Activated B cell treated with CpG ODN at 0.5 μM for 24 hours (primary cell): ENCODE measurements at regions of chr1 and their contacts with region 1.

Region 1: DNA sequence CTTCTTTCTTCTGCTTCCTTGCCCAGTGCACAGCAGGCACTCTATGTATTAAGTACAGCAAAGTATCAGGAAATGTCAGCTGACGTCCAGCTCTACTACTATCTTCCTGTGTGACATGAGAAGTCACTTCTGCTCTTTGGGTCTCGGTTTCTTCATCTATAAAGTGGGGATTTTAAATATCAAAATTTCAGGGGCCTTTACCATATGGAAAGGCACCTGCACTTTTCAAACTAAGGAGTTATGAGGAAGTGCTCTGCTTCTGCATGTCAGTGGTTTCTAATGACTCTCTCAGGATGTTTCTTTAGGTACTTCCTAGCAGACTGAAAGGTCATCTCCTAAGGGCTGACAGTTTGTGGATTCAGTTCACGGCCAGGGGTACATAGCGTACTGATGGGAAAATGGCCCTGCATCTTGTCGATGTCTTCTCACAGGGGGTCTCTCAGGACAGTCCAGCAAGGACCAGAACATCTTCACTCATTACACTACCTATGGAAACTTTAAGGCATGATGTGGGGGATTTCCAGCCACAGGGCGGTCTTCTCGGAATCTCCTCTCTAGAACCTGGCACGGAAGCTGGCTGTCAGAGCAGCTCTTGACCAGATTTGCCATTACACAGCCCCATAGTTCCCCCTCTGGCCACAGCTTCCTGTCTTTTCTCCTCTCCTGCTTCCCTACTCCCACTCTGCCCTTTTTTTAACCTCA is 42.0 kb upstream of the MTF1 start:
- DNase-seq: peak; percentile 23
- ATAC-seq: peak; percentile 76
- H3K4me3 Mint-ChIP-seq: peak overlapping the region; percentile 68
- H3K27ac Mint-ChIP-seq: peak overlapping the region; percentile 91
- H3K4me1 Mint-ChIP-seq: peaks cover 22% of the 10 kb centered on the region
- H3K27me3 Mint-ChIP-seq: no peaks in the 10 kb centered on the region
- CTCF ChIP-seq: no peak

Region 2: GRCh38 chr1:37817481-37817880 is 83.9 kb before region 1 on chr1:
- CTCF ChIA-PET with region 1: no interaction called
- POLR2A ChIA-PET with region 1: no interaction called
- intact Hi-C with region 1: no loop called
- DNase-seq: no peak
- ATAC-seq: no peak
- H3K4me3 Mint-ChIP-seq: no peak overlapping the region
- H3K27ac Mint-ChIP-seq: no peak overlapping the region
- H3K4me1 Mint-ChIP-seq: peaks cover 10% of the 10 kb centered on the region
- H3K27me3 Mint-ChIP-seq: no peaks in the 10 kb centered on the region
- CTCF ChIP-seq: no peak

Region 3: DNA sequence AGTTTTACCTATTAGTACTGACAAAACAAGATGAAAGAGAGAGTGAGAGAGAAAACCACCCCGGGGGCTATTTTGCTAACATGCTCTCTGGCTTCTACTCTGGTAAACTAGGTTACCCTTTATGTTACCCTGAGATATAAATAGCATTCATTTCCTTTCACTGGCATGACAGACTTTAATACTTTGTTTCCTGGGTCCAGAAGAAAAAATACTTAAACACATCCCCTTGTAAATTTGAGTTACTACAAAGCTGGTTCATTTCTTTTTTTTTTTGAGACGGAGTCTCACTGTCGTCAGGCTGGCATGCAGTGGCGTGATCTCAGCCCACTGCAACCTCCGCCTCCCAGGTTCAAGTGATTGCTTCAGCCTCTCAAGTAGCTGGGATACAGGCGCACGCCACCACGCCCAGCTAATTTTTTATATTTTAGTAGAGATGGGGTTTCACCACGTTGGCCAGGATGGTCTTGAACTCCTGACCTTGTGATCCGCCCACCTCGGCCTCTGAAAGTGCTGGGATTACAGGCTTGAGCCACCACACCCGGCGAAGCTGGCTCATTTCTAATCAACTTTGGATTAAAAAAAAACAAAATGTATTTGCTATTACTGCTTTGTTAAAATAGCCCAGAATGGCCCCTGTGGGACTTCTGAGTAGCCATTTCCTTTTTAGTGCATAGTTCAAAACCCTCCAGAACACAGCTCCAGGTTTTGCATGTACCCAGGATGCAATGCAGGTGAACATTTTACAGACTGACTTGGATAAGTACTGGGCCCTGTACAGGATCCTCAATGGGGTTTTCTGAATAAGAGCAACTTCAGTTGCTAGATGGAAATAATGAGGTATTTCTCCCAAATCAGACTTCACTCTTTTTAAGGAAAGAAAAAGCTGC is 24.9 kb after region 1 on chr1:
- CTCF ChIA-PET with region 1: interaction called, 4 read pairs
- POLR2A ChIA-PET with region 1: interaction called, 16 read pairs
- intact Hi-C with region 1: loop called (anchors 2 kb)
- DNase-seq: no peak
- ATAC-seq: peak; percentile 15
- H3K4me3 Mint-ChIP-seq: peak overlapping the region; percentile 64
- H3K27ac Mint-ChIP-seq: peak overlapping the region; percentile 87
- H3K4me1 Mint-ChIP-seq: peaks cover 76% of the 10 kb centered on the region
- H3K27me3 Mint-ChIP-seq: no peaks in the 10 kb centered on the region
- CTCF ChIP-seq: no peak

Region 4: GRCh38 chr1:37931361-37932158 is 30.2 kb after region 1 on chr1:
- CTCF ChIA-PET with region 1: interaction called, 9 read pairs
- POLR2A ChIA-PET with region 1: interaction called, 14 read pairs
- intact Hi-C with region 1: no loop called
- DNase-seq: peak; percentile 94
- ATAC-seq: peak; percentile 99
- H3K4me3 Mint-ChIP-seq: peak overlapping the region; percentile 99
- H3K27ac Mint-ChIP-seq: peak overlapping the region; percentile 87
- H3K4me1 Mint-ChIP-seq: peaks cover 48% of the 10 kb centered on the region
- H3K27me3 Mint-ChIP-seq: no peaks in the 10 kb centered on the region
- CTCF ChIP-seq: no peak